ENCODE measurements at regions of chr17 and their contacts with region 1.

Region 1: DNA sequence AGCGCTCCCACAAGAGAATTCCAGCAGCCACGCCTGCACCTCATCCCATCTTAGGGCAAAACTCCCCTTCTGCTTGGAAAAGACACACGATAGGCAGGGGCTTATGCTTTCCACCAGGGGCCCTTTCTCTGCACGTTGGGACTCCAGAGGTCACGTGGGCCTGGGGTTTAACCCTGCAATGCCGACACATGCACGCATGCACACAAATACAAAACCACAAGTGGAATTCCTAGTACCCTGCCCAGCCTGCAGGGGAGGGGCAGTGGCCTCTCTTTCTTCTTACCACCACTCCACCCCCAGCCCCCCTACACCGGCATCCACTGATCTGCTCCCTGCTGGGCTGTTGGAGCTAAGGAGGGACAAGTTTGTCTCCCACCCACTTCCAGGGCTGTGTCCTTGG is 16.8 kb upstream of the CCDC182 start:
- DNase-seq: no peak
- ATAC-seq: no peak
- H3K4me3 ChIP-seq: no peak overlapping the region
- H3K27ac ChIP-seq: no peak overlapping the region
- H3K4me1 ChIP-seq: no peaks in the 10 kb centered on the region
- H3K27me3 ChIP-seq: no peaks in the 10 kb centered on the region
- CTCF ChIP-seq: no peak
- POLR2A ChIP-seq: no peak

Region 2: DNA sequence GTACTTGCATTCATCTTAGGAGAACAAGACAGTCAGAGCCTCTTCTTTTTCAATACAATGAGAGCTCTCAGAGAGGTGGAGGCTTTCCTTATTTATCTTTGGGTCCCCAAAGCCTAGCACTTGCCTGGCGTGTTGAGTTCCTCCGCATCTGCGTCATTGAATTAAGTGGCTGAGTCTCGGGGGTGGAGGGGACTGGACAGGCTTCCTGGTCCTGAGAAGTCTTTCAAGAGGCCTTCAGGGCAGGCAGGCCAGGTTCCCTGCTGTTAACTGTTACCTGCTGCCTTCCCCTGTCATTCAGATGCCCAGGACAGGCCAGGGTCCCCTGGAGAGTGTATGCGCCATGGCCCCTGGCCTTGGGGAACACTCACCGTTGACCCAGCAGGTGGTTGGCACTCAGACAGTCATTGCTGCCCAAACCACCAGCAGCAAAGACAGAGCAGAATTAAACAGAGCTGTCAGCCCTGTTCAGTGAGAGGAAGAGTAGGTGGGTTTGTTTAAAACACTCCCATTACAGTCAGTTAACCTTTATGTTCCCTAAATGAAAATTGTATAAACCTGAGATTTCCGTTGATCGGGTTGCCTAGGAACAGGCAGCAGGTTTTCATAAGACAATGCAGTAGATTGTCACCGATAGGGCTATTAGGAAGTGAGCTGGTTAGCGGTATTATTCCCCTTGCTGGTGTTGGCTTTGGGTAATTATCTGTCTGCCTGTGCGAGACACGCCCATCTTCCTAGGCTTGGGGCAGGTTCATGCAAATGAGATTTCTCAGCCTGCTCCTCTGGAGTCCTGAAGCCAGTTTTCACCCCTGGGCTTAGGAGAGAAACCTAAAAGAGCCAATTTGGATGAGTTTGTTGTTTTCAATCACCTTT is 149.4 kb before region 1 on chr17:
- intact Hi-C with region 1: no loop called
- DNase-seq: no peak
- ATAC-seq: no peak
- H3K4me3 ChIP-seq: no peak overlapping the region
- H3K27ac ChIP-seq: no peak overlapping the region
- H3K4me1 ChIP-seq: peaks cover 0 to 11% (median 3%) of the 10 kb centered on the region in 12 donors
- H3K27me3 ChIP-seq: no peaks in the 10 kb centered on the region
- CTCF ChIP-seq: no peak
- POLR2A ChIP-seq: no peak

Region 3: DNA sequence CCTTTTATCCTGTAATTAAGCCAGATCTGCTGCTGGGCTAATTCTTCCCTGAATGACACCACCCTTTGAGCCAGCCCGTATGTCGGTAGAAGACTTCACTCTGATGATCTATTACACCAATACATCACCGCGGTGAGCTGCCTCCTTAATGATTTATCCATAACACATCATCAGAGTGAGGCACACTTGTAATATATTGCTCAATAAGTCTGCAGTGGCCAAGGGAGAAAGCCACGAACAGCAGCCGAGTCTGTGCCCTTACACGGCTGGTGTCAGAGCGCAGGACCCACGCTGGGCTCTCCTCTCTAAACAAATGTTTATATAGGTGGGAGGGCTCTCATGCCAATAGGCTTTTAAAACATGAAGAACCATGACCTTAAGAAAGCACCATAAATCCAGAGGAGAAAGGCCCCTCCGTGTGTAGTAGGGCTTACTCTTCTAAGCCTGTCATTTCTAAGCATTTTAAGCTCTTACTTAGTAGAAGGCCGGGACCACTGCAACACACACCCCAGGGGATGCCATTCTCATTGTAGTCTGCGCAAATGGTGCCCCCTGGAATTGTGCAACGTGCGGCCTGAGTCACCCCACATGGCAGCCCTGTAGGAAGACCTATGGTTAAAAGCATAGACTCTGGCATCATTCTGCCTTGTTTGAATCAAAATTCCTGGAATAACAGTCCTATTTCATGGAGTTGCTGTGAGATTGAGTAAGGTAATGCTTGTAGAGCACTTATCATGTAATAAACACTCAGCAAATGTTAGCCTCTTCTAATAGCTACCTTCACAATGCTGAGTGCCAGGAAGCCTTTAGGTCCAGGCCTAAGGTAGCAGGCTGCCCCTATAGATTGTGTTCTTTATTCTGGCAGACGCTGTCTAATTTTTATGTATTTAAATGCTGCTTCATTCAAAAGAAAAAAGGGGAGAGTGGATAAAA is 61.8 kb after region 1 on chr17:
- intact Hi-C with region 1: loop called in 1 of 10 experiments (anchors 10 kb)
- DNase-seq: no peak
- ATAC-seq: no peak
- H3K4me3 ChIP-seq: no peak overlapping the region
- H3K27ac ChIP-seq: no peak overlapping the region
- H3K4me1 ChIP-seq: no peaks in the 10 kb centered on the region
- H3K27me3 ChIP-seq: no peaks in the 10 kb centered on the region
- CTCF ChIP-seq: no peak
- POLR2A ChIP-seq: no peak

Region 4: GRCh38 chr17:57868007-57868909 is 106.4 kb after region 1 on chr17:
- intact Hi-C with region 1: no loop called
- DNase-seq: peak; percentile 76 to 87 (median 81)
- ATAC-seq: peak; percentile 48 to 92 (median 86)
- H3K4me3 ChIP-seq: no peak overlapping the region
- H3K27ac ChIP-seq: peak overlapping the region in 11 of 12 donors; percentile 31 to 89 (median 67)
- H3K4me1 ChIP-seq: peaks cover 0 to 49% (median 32%) of the 10 kb centered on the region in 12 donors
- H3K27me3 ChIP-seq: no peaks in the 10 kb centered on the region
- CTCF ChIP-seq: peak in 9 of 12 donors; percentile 7 to 60 (median 38)
- POLR2A ChIP-seq: no peak